ENCODE measurements at regions of chr2 and their contacts with region 1.

Region 1: DNA sequence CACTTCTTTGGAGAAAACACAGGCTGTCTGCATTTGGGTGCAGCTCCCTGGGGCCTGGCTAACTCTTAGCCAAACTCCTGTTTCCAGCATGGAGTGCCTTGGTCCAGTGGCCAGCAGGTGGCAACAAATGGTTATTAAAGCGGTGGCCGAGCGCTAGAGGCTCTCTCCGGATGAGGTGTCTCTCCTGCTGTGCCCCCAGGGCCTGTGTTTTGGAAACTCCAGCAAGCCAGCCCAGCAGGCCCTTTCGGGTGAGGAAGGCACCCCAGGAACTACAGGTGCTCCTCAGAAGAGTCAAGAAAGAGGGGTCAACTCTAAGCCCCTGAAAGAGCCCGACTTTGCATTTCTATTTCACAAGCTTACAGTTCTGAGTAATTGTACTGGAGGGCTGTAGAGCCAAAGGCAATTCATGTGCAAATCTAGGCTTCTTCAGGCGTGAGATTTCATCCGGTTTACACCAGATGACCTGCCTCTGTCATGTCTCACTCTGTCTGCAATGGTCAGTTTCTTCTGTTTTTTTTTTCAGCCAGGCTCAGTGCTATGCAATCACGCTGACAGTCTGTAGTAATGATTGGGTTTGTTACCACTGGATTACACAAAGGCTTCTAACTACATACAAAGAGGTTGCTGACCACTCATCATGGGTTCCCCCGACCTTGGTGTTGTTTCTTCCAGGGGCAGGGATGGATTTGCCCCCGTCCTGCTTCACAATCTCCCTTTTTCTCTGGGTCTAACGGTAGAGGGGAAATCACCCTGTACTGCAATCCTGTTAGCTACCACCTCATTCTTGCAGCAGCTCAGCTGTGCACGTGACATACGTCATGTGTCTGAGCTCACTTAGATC is 7.6 kb upstream of the CHRNA1 start:
- DNase-seq: peak; percentile 81

Region 2: GRCh38 chr2:174985630-174986029 is 213.8 kb after region 1 on chr2:
- in situ Hi-C with region 1: loop called (anchors 10 kb)
- DNase-seq: peak; percentile 47

Region 3: GRCh38 chr2:175402571-175402970 is 630.7 kb after region 1 on chr2:
- in situ Hi-C with region 1: no loop called
- DNase-seq: no peak

Measured in ACHN (cell line).